ENCODE measurements at regions of chr18 and their contacts with region 1.

Region 1: GRCh38 chr18:56168049-56168781 is 470.2 kb downstream of the TXNL1 start:
- DNase-seq: peak; percentile 91
- ATAC-seq: peak; percentile 88
- H3K4me3 ChIP-seq: no peak overlapping the region; the same call in 1 of the 2 replicates
- H3K27ac ChIP-seq: peak overlapping the region; percentile 100
- H3K4me1 ChIP-seq: peaks cover 20% of the 10 kb centered on the region
- H3K27me3 ChIP-seq: no peaks in the 10 kb centered on the region
- CTCF ChIP-seq: no peak
- POLR2A ChIP-seq: no peak
- RAD21 ChIP-seq: no peak

Region 2: GRCh38 chr18:56248610-56249235 is 80.5 kb after region 1 on chr18:
- CTCF ChIA-PET with region 1: no interaction called
- POLR2A ChIA-PET with region 1: no interaction called
- dilution Hi-C with region 1: no loop called
- in situ Hi-C with region 1: no loop called
- intact Hi-C with region 1: loop called (anchors 5 kb)
- DNase-seq: no peak
- ATAC-seq: no peak
- H3K4me3 ChIP-seq: no peak overlapping the region
- H3K27ac ChIP-seq: no peak overlapping the region
- H3K4me1 ChIP-seq: peaks cover 4% of the 10 kb centered on the region
- H3K27me3 ChIP-seq: no peaks in the 10 kb centered on the region
- CTCF ChIP-seq: no peak
- POLR2A ChIP-seq: no peak
- RAD21 ChIP-seq: no peak

Measured in IMR-90 (cell line).